CD8-positive, alpha-beta T cell (primary cell): ENCODE measurements at regions of chr13 and their contacts with region 1.

Region 1: GRCh38 chr13:71255633-71256032 is 611.4 kb downstream of the DACH1 start:
- DNase-seq: no peak
- ATAC-seq: no peak
- H3K4me3 ChIP-seq: no peak overlapping the region
- H3K4me3 Mint-ChIP-seq: no peak overlapping the region
- H3K27ac ChIP-seq: no peak overlapping the region
- H3K27ac Mint-ChIP-seq: no peak overlapping the region
- H3K4me1 ChIP-seq: no peaks in the 10 kb centered on the region
- H3K4me1 Mint-ChIP-seq: no peaks in the 10 kb centered on the region
- H3K27me3 ChIP-seq: no peaks in the 10 kb centered on the region
- H3K27me3 Mint-ChIP-seq: no peaks in the 10 kb centered on the region
- CTCF ChIP-seq: no peak

Region 2: GRCh38 chr13:71218960-71219359 is 36.7 kb before region 1 on chr13:
- CTCF ChIA-PET with region 1: no interaction called
- POLR2A ChIA-PET with region 1: no interaction called
- intact Hi-C with region 1: loop called in 1 of 2 experiments (anchors 2 kb)
- DNase-seq: no peak
- ATAC-seq: no peak
- H3K4me3 ChIP-seq: no peak overlapping the region
- H3K4me3 Mint-ChIP-seq: no peak overlapping the region
- H3K27ac ChIP-seq: no peak overlapping the region
- H3K27ac Mint-ChIP-seq: no peak overlapping the region
- H3K4me1 ChIP-seq: no peaks in the 10 kb centered on the region
- H3K4me1 Mint-ChIP-seq: no peaks in the 10 kb centered on the region
- H3K27me3 ChIP-seq: no peaks in the 10 kb centered on the region
- H3K27me3 Mint-ChIP-seq: no peaks in the 10 kb centered on the region
- CTCF ChIP-seq: no peak